ENCODE measurements at regions of chr4 and their contacts with region 1.

Region 1: DNA sequence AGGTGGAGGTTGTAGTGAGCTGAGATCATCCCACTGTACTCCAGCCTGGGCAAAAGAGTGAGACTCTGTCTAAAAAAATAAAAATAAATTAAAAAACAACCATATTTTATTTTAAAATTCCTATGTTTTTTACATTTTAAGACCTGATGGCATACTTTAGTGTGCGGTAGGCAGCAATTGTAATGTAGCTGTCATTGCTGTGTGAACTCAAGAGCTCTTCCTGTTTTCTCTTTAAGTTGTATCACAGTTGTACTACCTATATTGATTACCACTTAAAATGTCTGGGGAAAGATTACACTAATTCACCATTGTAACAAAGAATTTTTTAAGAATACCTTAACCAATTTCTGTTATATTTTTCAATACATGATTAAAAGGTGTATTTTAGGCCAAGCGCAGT is 27.3 kb downstream of the ABCE1 start:
- DNase-seq: no peak
- ATAC-seq: no peak
- H3K4me3 Mint-ChIP-seq: no peak overlapping the region
- H3K27ac Mint-ChIP-seq: peak overlapping the region; percentile 85
- H3K4me1 Mint-ChIP-seq: peaks cover 21% of the 10 kb centered on the region
- H3K27me3 Mint-ChIP-seq: no peaks in the 10 kb centered on the region

Region 2: GRCh38 chr4:145103496-145103895 is 21.9 kb before region 1 on chr4:
- CTCF ChIA-PET with region 1: interaction called, 8 read pairs
- POLR2A ChIA-PET with region 1: interaction called, 4 read pairs
- intact Hi-C with region 1: loop called (anchors 1 to 2 kb)
- DNase-seq: no peak
- ATAC-seq: no peak
- H3K4me3 Mint-ChIP-seq: no peak overlapping the region
- H3K27ac Mint-ChIP-seq: no peak overlapping the region
- H3K4me1 Mint-ChIP-seq: peaks cover 20% of the 10 kb centered on the region
- H3K27me3 Mint-ChIP-seq: no peaks in the 10 kb centered on the region

Measured in activated CD4-positive, alpha-beta T cell treated with anti-CD3 and anti-CD28 coated beads for 36 hours (primary cell).